Ascending aorta (tissue), 2 donors: ENCODE measurements at regions of chr12 and their contacts with region 1.

Region 1: DNA sequence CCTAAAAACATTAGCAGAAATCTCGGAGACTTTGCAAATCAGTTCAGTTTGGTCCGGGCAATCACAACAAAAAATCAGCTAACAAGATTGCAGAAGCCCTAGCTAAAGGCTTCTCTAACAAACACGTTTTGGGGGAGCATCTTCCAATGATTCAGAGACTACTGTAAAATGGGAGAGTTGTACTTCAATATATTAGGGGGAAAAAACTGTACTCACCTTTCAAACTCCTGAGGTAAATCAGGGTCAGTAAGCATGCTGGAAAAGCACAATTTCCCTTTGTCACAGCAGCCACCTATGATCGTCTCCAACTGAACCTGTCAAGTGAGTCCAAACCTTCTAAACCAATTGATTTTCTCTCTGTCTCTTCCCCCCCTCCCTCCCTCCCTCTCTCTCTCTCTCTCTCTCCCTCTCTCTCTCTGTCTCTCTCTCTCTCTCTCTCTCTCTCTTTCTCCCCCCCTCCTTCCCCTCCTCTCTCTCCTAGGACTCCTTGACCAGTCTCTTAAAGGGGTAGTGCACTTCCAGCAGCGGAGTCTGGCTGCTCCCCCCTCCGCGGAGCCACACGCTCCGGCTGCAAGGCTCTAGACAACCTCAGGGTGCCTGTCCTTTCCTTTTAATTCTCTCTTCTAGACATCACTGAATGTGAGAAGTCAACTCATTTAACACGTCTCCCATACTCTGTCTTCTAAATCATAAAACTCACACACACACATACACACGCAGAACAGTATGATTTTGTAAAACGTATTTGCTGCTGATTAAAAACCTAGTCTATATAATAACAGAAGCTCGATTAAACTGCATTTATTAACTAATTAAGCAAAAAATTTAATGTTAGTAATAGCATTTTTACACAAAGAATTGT is at the start of gene SOX5:
- DNase-seq: peak in 1 of 2 donors; percentile 65
- H3K4me3 ChIP-seq: peak within 1 kb of the TSS; percentile 59 to 71
- H3K27ac ChIP-seq: no peak within 1 kb of the TSS
- H3K4me1 ChIP-seq: peaks cover 0 to 6% of the 10 kb centered on the region in 2 donors
- H3K27me3 ChIP-seq: no peaks in the 10 kb centered on the region
- CTCF ChIP-seq: no peak
- total RNA-seq, gene SOX5: 18.2 TPM

Region 2: DNA sequence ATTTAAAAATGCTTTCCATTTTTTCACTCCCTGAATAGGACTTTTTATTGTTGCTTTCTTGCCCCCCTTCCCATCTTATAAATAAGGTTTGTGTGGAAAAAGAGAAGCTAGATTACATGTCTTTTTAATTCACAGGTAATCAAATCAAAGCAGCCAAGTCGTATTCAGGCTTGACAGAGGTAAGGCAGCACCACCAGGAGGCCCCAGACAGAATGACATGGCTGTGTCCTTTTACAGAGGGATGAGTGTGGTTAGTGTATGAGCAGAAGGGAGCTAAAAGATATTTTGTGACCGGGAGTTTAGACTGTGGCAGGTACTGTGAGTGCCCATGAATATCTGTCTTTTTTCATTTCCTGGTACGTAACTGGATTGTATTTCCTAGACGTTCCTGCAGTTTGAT is 728.5 kb before region 1 on chr12:
- intact Hi-C with region 1: loop called (anchors 10 kb)
- DNase-seq: no peak
- H3K4me3 ChIP-seq: no peak overlapping the region
- H3K27ac ChIP-seq: no peak overlapping the region
- H3K4me1 ChIP-seq: no peaks in the 10 kb centered on the region
- H3K27me3 ChIP-seq: no peaks in the 10 kb centered on the region
- CTCF ChIP-seq: no peak

Region 3: GRCh38 chr12:23847860-23848259 is 101.7 kb before region 1 on chr12:
- intact Hi-C with region 1: no loop called
- DNase-seq: no peak
- H3K4me3 ChIP-seq: no peak overlapping the region
- H3K27ac ChIP-seq: no peak overlapping the region
- H3K4me1 ChIP-seq: no peaks in the 10 kb centered on the region
- H3K27me3 ChIP-seq: no peaks in the 10 kb centered on the region
- CTCF ChIP-seq: no peak

Region 4: DNA sequence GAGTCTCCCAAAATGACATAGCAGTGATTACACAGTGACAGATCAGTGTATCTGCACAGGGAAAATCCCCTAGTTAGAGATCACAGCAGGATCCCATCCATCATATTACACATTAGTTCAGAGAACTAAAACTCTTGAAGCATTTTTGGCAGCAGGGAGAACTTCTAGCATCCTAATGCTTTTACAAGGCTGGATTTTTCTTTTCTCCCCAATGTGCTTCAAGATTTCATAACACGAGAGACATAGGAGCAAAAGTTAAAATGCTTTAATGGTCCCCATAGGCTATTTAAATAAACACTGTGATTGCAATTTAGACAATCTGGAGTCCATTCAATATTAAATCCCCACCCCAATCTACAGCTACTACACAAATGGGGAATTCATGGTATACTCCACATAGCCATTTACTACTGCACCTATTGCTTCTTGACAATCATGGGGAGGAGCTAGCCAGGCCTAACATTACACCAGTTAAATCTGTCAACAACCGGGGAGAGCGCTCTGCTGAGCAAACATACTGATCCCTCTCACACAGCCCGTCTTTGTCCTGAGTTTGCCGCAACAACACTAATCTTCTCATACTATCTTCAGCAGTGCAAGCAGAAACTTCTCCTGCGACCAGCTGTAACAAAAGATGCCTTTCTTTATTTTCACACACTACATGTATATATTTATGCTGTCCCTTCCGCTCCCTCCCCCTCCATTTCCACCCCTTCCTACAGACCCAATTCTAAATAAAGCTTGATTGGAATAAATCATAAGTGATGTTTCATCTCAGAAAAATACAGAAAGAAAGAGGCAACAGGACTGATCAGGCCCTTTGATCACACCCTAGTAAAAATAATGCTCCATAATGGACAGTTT is 120.2 kb after region 1 on chr12:
- intact Hi-C with region 1: loop called (anchors 2 kb)
- DNase-seq: no peak
- H3K4me3 ChIP-seq: no peak overlapping the region
- H3K27ac ChIP-seq: no peak overlapping the region
- H3K4me1 ChIP-seq: peaks cover 0 to 7% of the 10 kb centered on the region in 2 donors
- H3K27me3 ChIP-seq: no peaks in the 10 kb centered on the region
- CTCF ChIP-seq: no peak